Right ventricle myocardium superior (tissue), 1 donor: ENCODE measurements at regions of chr3 and their contacts with region 1.

Region 1: GRCh38 chr3:47420511-47421484 is 40.0 kb downstream of the PTPN23 start:
- DNase-seq: peak; percentile 92
- ATAC-seq: peak; percentile 83

Region 2: DNA sequence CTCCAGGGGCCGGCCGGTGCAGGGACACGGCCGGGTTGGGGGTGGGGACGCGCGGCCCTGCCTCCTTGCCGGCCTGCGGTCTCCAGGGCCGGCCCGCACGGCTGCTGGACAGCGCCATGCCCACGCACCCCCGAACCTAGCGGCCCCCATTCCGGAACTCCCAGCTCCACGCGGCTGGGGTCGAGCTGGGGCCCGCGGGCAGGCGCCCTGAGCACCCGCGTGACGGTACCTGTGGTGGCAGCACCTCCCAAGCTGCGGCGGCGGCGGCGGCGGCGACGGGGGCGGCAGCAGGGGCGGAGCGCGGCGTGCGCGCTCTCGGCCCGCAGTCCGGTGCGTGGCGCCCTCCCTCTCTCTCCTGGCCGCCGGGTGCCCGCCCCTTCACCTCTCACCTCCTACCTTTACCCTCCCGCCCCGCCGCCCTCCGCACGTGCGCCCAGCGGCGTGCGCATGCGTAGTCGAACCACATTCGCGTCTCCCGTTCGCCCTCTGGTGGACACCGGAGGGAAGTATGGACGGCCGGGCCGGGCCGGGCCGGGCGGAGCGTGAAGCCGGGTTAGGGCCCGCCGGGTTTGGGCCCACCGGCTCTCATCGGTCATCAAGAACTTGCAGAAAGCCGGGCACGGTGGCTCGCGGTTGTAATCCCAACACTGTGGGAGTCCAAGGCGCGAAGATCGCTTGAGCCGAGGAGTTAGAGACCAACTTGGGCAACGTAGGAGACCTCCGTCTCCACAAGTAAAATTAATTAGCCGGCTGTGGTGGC is 55.0 kb after region 1 on chr3 and contains the start of gene SCAP:
- intact Hi-C with region 1: loop called (anchors 5 kb)
- DNase-seq: peak; percentile 96
- ATAC-seq: peak; percentile 98
- total RNA-seq, gene SCAP: 39.7 TPM

Region 3: GRCh38 chr3:47715928-47716327 is 295.1 kb after region 1 on chr3:
- intact Hi-C with region 1: no loop called
- DNase-seq: no peak
- ATAC-seq: peak; percentile 34